A673 (cell line): ENCODE measurements at regions of chr18 and their contacts with region 1.

Region 1: DNA sequence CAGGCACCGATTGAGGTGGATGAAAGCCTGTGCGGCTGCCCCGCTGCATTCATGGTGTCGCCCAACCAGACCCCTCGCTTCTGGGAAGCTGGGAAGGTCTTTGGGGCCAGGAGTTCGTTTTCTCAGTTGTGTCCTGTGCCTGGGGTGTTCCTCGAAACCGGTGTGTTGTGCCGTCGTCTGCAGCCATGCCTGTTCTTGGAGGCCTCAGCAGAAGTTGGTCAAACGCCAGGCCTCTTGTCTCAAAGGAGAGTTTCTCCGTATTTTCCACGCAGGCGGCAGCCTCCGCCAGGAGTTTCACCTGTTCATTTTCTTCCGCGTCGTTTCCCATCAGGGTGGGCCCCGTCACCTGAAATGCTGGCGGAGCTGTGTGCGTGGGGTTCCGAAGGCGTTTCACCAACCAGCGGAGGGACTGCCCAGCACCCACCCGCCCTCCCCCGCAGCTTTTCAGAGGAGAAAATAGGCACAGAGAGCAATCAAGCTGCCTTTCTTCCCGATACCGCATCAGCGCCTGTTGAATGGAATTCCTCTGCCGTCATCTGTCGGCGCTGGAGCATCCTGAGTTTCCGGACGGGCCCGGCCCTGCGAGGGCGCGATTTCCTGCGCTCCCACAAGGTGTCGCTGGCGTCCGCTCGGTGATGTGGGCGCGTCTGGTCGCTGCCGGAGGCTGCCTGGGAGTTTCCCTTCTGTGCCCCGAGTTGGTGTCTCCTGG is 17.0 kb upstream of the NFATC1 start:
- DNase-seq: peak; percentile 80
- H3K4me3 ChIP-seq: no peak overlapping the region
- H3K27ac ChIP-seq: no peak overlapping the region
- H3K4me1 ChIP-seq: no peaks in the 10 kb centered on the region
- H3K27me3 ChIP-seq: no peaks in the 10 kb centered on the region
- CTCF ChIP-seq: peak; percentile 97

Region 2: GRCh38 chr18:79644006-79644665 is 265.4 kb after region 1 on chr18:
- CTCF ChIA-PET with region 1: interaction called, 7 read pairs
- POLR2A ChIA-PET with region 1: no interaction called
- intact Hi-C with region 1: loop called (anchors 1 kb)
- DNase-seq: peak; percentile 61
- H3K4me3 ChIP-seq: no peak overlapping the region
- H3K27ac ChIP-seq: no peak overlapping the region
- H3K4me1 ChIP-seq: peaks cover 15% of the 10 kb centered on the region
- H3K27me3 ChIP-seq: no peaks in the 10 kb centered on the region
- CTCF ChIP-seq: peak; percentile 95

Region 3: GRCh38 chr18:80009661-80010550 is 631.2 kb after region 1 on chr18:
- CTCF ChIA-PET with region 1: no interaction called
- POLR2A ChIA-PET with region 1: no interaction called
- intact Hi-C with region 1: no loop called
- DNase-seq: no peak
- H3K4me3 ChIP-seq: no peak overlapping the region
- H3K27ac ChIP-seq: no peak overlapping the region
- H3K4me1 ChIP-seq: no peaks in the 10 kb centered on the region
- H3K27me3 ChIP-seq: no peaks in the 10 kb centered on the region
- CTCF ChIP-seq: no peak